MCF 10A (cell line): ENCODE measurements at regions of chr22 and their contacts with region 1.

Region 1: DNA sequence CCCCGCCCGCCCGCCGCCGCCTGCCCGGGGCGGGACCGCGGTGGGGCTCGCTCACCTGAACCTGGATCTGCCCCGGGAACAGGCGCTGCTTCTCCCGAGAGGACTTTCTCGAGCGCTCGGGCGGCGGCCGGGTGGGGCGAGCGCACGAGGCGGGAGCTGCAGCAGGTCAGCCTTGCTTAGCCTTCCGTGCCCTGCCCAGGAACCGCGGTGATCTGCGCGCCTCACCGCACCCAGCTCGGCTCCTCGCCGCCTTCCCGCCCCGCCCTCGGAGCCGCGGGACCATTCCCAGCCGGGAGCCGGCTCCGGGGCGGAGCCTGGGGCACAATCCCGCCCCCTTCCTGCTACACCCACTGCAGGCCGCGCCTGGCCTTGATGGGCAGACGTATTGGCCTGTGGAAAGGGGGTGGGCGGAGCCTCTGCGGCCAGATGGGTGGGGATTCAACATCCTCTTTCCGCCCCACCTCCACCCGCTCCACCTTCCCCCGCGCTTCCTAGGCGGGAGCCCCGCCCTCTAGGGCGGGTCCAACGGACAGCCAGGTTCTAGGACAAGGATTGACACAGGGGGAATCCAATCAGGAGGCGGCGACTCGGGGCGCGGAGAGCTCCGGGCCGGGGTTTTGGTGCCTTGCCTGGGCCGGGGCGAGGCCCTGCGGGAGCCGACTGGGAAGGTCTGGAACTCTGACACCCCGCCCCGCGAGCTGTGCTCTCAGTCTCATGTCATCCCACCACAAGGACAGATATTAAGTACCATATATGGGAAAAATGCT is at the start of gene MYH9:
- DNase-seq: peak; percentile 100
- H3K4me3 Mint-ChIP-seq: peak within 1 kb of the TSS; percentile 91
- H3K27ac Mint-ChIP-seq: peak within 1 kb of the TSS; percentile 94
- H3K4me1 Mint-ChIP-seq: peaks cover 29% of the 10 kb centered on the region
- H3K27me3 Mint-ChIP-seq: no peaks in the 10 kb centered on the region
- CTCF ChIP-seq: no peak
- total RNA-seq, gene MYH9: 643 and 653 TPM in 2 replicates

Region 2: GRCh38 chr22:36331306-36331911 is 56.5 kb before region 1 on chr22:
- CTCF ChIA-PET with region 1: interaction called, 5 read pairs
- POLR2A ChIA-PET with region 1: interaction called, 120 read pairs
- intact Hi-C with region 1: loop called (anchors 1 kb)
- DNase-seq: peak; percentile 97
- H3K4me3 Mint-ChIP-seq: peak overlapping the region; percentile 64
- H3K27ac Mint-ChIP-seq: peak overlapping the region; percentile 98
- H3K4me1 Mint-ChIP-seq: peaks cover 73% of the 10 kb centered on the region
- H3K27me3 Mint-ChIP-seq: no peaks in the 10 kb centered on the region
- CTCF ChIP-seq: no peak

Region 3: DNA sequence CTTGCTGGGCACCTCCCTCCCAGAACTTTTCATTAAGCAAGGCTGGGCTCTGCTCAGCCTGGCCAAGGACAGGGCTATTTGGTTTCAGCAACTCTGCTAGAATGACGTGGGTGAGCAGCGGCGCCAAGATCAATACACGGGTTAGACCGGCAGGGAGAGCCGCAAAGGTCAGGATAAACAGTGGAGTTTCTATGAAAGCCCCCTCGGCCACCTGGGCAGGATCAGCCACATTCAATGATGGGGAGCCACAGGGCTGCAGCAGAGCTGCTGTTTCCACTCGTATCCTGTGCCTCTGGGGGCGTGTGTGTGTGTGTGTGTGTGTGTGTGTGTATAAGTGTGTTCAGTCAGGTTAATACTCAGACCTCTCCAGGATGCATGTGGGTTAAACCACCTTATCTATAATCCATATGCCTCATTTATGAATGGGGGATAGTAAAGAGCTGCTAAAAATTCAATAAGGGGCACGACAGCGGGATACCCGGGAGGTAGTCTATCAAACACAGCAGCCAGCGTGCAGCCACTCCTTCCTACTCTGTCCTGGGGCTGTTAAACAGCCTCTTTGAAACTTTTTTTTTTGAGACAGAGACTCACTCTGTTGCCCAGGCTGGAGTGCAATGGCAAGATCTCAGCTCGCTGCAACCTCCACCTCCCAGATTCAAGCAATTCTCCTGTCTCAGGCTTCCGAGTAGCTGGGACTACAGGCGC is 35.0 kb before region 1 on chr22:
- CTCF ChIA-PET with region 1: interaction called, 7 read pairs
- POLR2A ChIA-PET with region 1: interaction called, 29 read pairs
- intact Hi-C with region 1: loop called (anchors 5 kb)
- DNase-seq: peak; percentile 83
- H3K4me3 Mint-ChIP-seq: peak overlapping the region; percentile 55
- H3K27ac Mint-ChIP-seq: peak overlapping the region; percentile 83
- H3K4me1 Mint-ChIP-seq: peaks cover 64% of the 10 kb centered on the region
- H3K27me3 Mint-ChIP-seq: no peaks in the 10 kb centered on the region
- CTCF ChIP-seq: no peak

Region 4: DNA sequence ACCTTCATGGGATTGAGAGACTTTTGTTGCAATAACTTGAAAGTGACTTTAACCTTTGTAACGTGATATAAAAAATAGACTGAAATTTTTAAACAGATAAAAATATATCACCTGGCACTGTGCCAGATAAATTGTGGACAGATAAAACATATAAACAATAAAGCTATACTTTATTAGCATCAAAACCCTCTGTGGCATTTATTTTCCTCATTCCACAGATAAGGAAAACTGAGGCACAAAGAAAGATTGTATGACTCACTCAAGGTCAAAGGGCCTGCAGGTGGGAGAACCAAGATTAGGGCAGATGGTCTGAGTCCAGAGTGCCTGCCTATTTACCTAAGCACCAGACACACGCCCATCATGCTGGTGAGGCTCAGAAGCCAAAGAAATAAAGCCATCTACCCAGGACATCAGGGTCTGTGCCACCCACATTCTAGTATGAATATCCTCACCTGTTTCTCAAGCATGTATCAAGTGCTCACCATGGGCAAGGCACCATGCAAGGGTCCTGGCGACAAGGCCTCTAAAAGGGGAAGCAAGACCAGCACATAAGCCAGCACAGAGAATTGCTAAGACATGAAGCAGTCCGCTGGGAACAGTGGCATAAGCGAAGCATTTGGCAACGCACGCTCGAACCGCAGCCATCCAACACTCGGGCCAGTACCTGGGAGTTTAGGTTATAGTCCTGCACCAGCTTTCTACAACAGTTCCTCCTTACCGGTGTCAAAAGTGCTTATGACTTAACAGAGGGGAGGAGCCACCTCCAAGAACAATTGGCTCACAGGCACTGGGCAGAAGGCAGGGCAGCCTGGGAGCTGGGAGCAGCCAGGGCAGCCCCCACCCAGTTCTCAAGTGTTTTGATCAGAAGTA is 17.8 kb before region 1 on chr22:
- CTCF ChIA-PET with region 1: interaction called, 14 read pairs
- POLR2A ChIA-PET with region 1: interaction called, 88 read pairs
- intact Hi-C with region 1: loop called (anchors 2 kb)
- DNase-seq: peak; percentile 82
- H3K4me3 Mint-ChIP-seq: peak overlapping the region; percentile 54
- H3K27ac Mint-ChIP-seq: peak overlapping the region; percentile 79
- H3K4me1 Mint-ChIP-seq: peaks cover 64% of the 10 kb centered on the region
- H3K27me3 Mint-ChIP-seq: no peaks in the 10 kb centered on the region
- CTCF ChIP-seq: no peak

Region 5: GRCh38 chr22:36409911-36410756 is 22.2 kb after region 1 on chr22:
- CTCF ChIA-PET with region 1: interaction called, 4 read pairs
- POLR2A ChIA-PET with region 1: interaction called, 57 read pairs
- intact Hi-C with region 1: no loop called
- DNase-seq: peak; percentile 97
- H3K4me3 Mint-ChIP-seq: peak overlapping the region; percentile 78
- H3K27ac Mint-ChIP-seq: peak overlapping the region; percentile 85
- H3K4me1 Mint-ChIP-seq: peaks cover 26% of the 10 kb centered on the region
- H3K27me3 Mint-ChIP-seq: no peaks in the 10 kb centered on the region
- CTCF ChIP-seq: no peak

Region 6: DNA sequence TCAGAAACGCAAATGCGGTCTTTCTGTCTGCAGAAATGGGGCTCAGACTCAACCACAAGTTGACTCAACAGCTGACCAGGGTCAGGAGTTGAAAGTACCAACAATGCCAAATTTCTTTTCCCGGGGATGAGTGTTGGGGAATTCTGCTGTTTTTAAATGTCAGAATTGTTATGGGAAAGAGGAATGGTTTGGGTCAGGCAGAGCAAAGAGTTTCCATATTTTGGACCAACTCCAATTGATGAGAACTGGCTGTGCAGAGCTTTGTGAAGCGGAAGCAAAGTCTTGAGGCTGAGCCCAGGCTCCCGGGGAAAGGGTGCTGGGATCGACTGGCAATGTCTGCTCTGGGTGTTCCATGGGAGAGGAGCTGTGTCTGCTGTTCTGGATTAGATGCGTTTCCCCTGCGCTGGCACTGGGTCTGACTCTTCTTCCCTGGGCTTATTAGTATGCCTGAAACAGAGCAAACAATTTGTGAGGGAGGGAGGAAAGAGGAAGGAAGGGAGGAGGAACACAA is 57.3 kb after region 1 on chr22:
- CTCF ChIA-PET with region 1: no interaction called
- POLR2A ChIA-PET with region 1: interaction called, 10 read pairs
- intact Hi-C with region 1: no loop called
- DNase-seq: no peak
- H3K4me3 Mint-ChIP-seq: no peak overlapping the region
- H3K27ac Mint-ChIP-seq: no peak overlapping the region
- H3K4me1 Mint-ChIP-seq: peaks cover 6% of the 10 kb centered on the region
- H3K27me3 Mint-ChIP-seq: no peaks in the 10 kb centered on the region
- CTCF ChIP-seq: no peak

Region 7: DNA sequence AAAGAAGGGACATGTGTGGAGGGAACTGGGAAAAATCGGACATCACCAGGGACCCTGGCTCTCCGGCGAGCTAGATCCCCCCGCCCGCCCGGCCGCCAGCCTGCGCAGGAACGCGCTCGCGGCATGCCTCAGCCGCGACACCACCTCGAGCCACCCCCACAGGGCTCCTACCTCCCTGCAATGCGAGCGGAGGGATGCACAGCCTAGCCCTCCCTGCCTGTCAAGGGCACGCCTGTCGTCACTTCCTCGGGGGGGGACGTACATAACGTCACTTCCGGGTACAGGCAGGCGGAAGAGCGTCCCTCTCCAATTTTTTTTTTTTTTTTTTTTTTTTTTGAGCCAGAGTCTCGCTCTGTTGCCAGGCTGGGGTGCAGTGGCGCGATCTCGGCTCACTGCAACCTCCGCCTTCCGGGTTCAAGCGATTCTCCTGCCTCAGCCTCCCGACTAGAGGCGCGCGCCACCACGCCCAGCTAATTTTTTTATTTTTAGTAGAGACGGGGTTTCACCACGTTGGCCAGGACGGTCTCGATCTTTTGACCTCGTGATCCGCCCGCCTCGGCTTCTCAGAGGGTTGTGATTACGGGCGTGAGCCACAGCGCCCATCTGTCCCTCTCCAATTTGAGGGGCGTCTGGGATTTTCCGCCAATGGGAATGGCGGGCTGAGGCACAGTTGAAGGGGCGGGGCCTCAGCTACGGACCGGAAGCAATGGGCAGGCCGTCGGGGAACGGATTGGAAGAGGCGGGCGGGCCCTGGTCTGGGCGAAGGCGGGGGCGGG is 93.6 kb after region 1 on chr22 and contains the start of gene TXN2:
- CTCF ChIA-PET with region 1: no interaction called
- POLR2A ChIA-PET with region 1: interaction called, 29 read pairs
- intact Hi-C with region 1: no loop called
- DNase-seq: peak; percentile 97
- H3K4me3 Mint-ChIP-seq: peak within 1 kb of the TSS; percentile 96
- H3K27ac Mint-ChIP-seq: peak within 1 kb of the TSS; percentile 91
- H3K4me1 Mint-ChIP-seq: peaks cover 10% of the 10 kb centered on the region
- H3K27me3 Mint-ChIP-seq: no peaks in the 10 kb centered on the region
- CTCF ChIP-seq: no peak
- total RNA-seq, gene TXN2: 61.5 and 83.2 TPM in 2 replicates

Region 8: GRCh38 chr22:36569999-36570398 is 182.1 kb after region 1 on chr22:
- CTCF ChIA-PET with region 1: no interaction called
- POLR2A ChIA-PET with region 1: no interaction called
- intact Hi-C with region 1: no loop called
- DNase-seq: peak; percentile 40
- H3K4me3 Mint-ChIP-seq: no peak overlapping the region
- H3K27ac Mint-ChIP-seq: no peak overlapping the region
- H3K4me1 Mint-ChIP-seq: peaks cover 11% of the 10 kb centered on the region
- H3K27me3 Mint-ChIP-seq: peaks cover 13% of the 10 kb centered on the region
- CTCF ChIP-seq: peak; percentile 11